AG04450 (cell line): ENCODE measurements at regions of chr5 and their contacts with region 1.

Region 1: GRCh38 chr5:154189819-154190594 is 526 bp upstream of the GALNT10 start:
- DNase-seq: no peak
- H3K4me3 ChIP-seq: peak overlapping the region; percentile 79
- H3K27ac ChIP-seq: no peak overlapping the region
- H3K27me3 ChIP-seq: no peaks in the 10 kb centered on the region
- CTCF ChIP-seq: peak; percentile 60

Region 2: GRCh38 chr5:154038707-154039457 is 151.1 kb before region 1 on chr5 and contains the starts of genes FAM114A2 and MFAP3:
- CTCF ChIA-PET with region 1: no interaction called
- POLR2A ChIA-PET with region 1: interaction called, 10 read pairs
- DNase-seq: peak; percentile 45
- H3K4me3 ChIP-seq: peak within 1 kb of the TSS; percentile 93
- H3K27ac ChIP-seq: peak within 1 kb of the TSS; percentile 81
- H3K27me3 ChIP-seq: no peaks in the 10 kb centered on the region
- CTCF ChIP-seq: no peak
- polyA plus RNA-seq, gene FAM114A2: 19.4 and 23.8 TPM in 2 replicates
- polyA plus RNA-seq, gene MFAP3: 35.7 and 44.8 TPM in 2 replicates

Region 3: GRCh38 chr5:154276973-154277331 is 86.9 kb after region 1 on chr5:
- CTCF ChIA-PET with region 1: interaction called, 3 read pairs
- POLR2A ChIA-PET with region 1: interaction called, 18 read pairs
- DNase-seq: peak; percentile 94
- H3K4me3 ChIP-seq: no peak overlapping the region
- H3K27ac ChIP-seq: peak overlapping the region; percentile 68
- H3K27me3 ChIP-seq: no peaks in the 10 kb centered on the region
- CTCF ChIP-seq: no peak

Region 4: GRCh38 chr5:154287136-154287535 is 97.1 kb after region 1 on chr5:
- CTCF ChIA-PET with region 1: no interaction called
- POLR2A ChIA-PET with region 1: interaction called, 16 read pairs
- DNase-seq: peak; percentile 49
- H3K4me3 ChIP-seq: no peak overlapping the region
- H3K27ac ChIP-seq: no peak overlapping the region
- H3K27me3 ChIP-seq: no peaks in the 10 kb centered on the region
- CTCF ChIP-seq: no peak

Region 5: GRCh38 chr5:154405078-154405792 is 215.2 kb after region 1 on chr5:
- CTCF ChIA-PET with region 1: interaction called, 98 read pairs
- POLR2A ChIA-PET with region 1: interaction called, 10 read pairs
- DNase-seq: peak; percentile 43
- H3K4me3 ChIP-seq: peak overlapping the region; percentile 45
- H3K27ac ChIP-seq: no peak overlapping the region
- H3K27me3 ChIP-seq: no peaks in the 10 kb centered on the region
- CTCF ChIP-seq: peak; percentile 88